ENCODE measurements at regions of chr17 and their contacts with region 1.

Region 1: DNA sequence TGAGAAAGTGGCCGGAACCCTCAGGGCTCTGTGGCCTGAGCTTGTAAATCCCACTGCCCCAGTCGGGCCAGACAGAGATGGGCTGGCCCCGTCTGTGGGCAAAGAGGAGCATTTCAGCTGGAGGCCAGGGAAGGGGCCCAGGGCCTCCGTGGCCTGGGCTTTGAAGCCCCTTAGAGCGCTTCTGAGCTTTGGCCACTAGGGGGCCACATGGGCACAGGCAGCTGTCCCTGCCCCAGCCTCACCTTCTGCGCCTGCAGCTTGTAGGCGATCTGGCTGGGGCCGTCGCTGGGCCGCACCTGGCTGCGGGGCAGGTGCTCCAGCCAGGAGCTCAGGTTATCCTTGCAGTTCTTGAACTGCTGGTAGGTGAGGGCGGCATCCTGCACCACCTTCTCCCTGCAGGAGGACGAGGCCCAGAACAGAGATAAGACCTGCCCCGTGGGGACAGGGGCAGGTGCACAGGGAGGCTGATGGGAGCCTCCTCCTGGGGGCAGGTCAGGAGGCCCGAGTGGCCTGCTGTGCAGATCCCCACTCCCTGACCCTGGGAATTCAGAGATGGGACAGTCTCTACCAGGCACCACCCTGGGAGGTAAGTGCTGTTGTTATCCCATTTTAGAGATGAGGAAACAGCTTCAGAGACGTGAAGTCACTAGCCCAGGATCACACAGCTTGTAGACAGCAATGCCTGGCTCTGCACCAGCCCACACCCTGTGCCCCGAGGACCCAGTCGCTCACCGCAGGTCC is 12.8 kb downstream of the EVPL start:
- DNase-seq: peak; percentile 93
- CTCF ChIP-seq: peak; percentile 99

Region 2: GRCh38 chr17:75896415-75897159 is 117.8 kb before region 1 on chr17 and contains the start of gene TRIM65:
- CTCF ChIA-PET with region 1: interaction called, 239 read pairs
- POLR2A ChIA-PET with region 1: no interaction called
- DNase-seq: peak; percentile 92
- CTCF ChIP-seq: peak; percentile 69

Region 3: GRCh38 chr17:75914643-75915267 is 99.6 kb before region 1 on chr17:
- CTCF ChIA-PET with region 1: interaction called, 239 read pairs
- POLR2A ChIA-PET with region 1: no interaction called
- DNase-seq: no peak
- CTCF ChIP-seq: no peak

Region 4: DNA sequence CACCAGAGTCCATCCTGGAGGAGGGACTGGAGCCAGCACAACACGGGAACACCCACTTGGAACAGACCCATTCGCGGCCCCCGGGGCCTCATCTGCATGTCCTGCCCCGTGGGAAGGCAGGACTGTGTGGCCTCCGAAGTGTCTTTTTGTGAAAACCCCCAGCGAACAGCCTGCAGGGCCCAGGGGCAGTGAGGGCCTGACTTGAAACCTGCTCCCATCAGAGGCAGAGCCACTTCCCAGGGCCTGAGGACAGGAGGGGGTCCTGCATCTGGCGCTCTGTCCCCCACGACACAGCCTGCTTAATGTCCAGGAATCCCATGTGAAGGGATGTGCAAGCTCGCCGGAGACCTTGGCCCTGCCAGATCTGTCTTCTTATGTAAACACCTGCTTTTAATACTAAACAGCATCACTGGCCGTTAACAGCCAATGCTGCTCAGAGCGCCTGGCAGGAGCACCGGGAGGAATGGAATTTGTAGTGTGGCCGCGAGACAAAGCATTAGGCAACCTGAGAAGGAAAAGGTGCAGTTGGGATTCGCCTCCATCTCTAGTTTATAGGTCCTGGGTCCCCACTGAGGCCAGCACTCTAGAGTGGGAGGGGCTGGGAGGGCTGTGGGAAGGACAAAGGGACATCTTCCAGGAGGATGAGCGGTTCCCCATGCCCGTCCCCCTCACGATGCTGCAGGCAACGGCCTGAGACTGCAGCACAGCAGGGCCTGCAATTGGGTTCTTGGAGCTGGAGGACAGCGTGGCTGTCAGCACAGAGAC is 22.3 kb after region 1 on chr17:
- CTCF ChIA-PET with region 1: interaction called, 24 read pairs
- POLR2A ChIA-PET with region 1: no interaction called
- DNase-seq: no peak
- CTCF ChIP-seq: no peak

Region 5: DNA sequence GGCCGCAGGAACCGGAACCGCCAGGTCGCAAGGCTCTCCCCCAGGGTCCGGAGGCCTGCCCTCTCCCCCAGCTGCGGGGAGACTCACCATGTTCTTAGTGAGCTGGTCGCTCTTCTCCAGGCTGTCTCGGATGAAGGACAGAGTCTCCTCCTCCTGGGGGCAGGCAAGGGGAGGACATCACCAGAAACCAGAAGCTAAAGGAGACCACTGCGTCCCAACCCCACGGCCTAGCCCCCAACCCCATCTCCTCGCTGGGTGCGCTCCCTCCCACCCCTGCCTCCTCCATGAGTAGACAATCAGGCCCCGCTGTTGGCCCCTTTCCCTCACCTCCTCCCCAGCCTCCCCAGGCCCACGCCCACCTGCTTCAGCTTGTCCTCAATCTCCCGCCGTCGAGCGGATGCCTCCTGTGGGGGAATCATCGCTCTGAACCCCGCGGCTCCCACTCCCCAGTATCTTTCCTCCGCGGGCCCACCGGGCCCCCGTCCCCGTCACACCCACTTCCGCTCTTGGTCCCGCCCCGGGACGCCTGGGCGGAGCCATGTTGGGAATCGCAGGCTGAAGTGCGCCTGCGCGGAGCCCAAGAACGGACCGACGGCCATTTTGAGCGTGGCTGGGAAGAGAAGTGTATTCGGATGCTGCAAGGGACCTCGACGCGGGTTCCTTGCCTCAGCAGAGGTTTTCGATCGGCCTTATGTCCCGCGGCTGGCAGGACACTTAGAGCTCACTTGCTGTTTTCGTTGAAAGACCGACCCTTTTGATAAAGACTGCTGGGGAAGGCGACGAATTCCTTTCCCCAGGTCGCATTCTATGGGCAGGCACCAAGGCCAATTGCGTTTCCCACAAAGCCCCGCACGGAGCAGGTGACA is 89.2 kb after region 1 on chr17 and contains the start of gene EXOC7:
- CTCF ChIA-PET with region 1: interaction called, 18 read pairs
- POLR2A ChIA-PET with region 1: no interaction called
- DNase-seq: peak; percentile 99
- CTCF ChIP-seq: no peak

Region 6: DNA sequence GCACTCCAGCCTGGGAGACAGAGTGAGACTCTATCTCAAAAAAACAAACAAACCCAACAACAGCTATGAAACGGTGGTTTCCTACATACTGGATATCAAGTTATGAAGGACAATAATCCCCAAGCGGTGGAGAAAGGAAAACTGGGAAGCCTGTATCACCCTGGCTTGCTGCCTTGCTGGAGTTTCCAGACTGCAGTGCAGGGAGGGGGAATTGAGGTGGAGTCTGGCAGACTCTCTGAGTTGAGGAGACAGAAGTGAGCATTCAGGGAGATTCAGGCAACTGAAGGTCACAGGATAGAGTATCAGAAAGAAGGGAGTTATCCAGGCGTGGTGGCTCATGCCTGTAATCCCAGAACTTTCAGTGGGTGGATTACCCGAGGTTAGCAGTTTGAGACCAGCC is 281.8 kb after region 1 on chr17:
- CTCF ChIA-PET with region 1: interaction called, 31 read pairs
- POLR2A ChIA-PET with region 1: no interaction called
- DNase-seq: no peak
- CTCF ChIP-seq: no peak

Measured in GM10248 (cell line).